ENCODE measurements at regions of chr9 and their contacts with region 1.

Region 1: GRCh38 chr9:71768388-71769174 is at the start of gene CEMIP2:
- DNase-seq: peak; percentile 91
- ATAC-seq: peak; percentile 80
- H3K4me3 ChIP-seq: peak within 1 kb of the TSS; percentile 73 to 95 (median 94)
- H3K4me3 Mint-ChIP-seq: peak within 1 kb of the TSS; percentile 92
- H3K27ac ChIP-seq: peak within 1 kb of the TSS; percentile 87 to 89
- H3K27ac Mint-ChIP-seq: peak within 1 kb of the TSS; percentile 97
- H3K4me1 ChIP-seq: peaks cover 47 to 56% of the 10 kb centered on the region in 2 donors
- H3K4me1 Mint-ChIP-seq: peaks cover 52% of the 10 kb centered on the region
- H3K27me3 ChIP-seq: no peaks in the 10 kb centered on the region
- H3K27me3 Mint-ChIP-seq: no peaks in the 10 kb centered on the region
- CTCF ChIP-seq: no peak
- total RNA-seq, gene CEMIP2: 86.9 and 90.6 TPM in 2 replicates

Region 2: GRCh38 chr9:71604197-71605063 is 164.2 kb before region 1 on chr9:
- CTCF ChIA-PET with region 1: interaction called, 12 read pairs
- POLR2A ChIA-PET with region 1: no interaction called
- intact Hi-C with region 1: loop called (anchors 2 kb)
- DNase-seq: peak; percentile 75
- ATAC-seq: peak; percentile 68
- H3K4me3 ChIP-seq: no peak overlapping the region
- H3K4me3 Mint-ChIP-seq: no peak overlapping the region
- H3K27ac ChIP-seq: no peak overlapping the region
- H3K27ac Mint-ChIP-seq: no peak overlapping the region
- H3K4me1 ChIP-seq: no peaks in the 10 kb centered on the region
- H3K4me1 Mint-ChIP-seq: no peaks in the 10 kb centered on the region
- H3K27me3 ChIP-seq: no peaks in the 10 kb centered on the region
- H3K27me3 Mint-ChIP-seq: no peaks in the 10 kb centered on the region
- CTCF ChIP-seq: peak; percentile 95

Region 3: DNA sequence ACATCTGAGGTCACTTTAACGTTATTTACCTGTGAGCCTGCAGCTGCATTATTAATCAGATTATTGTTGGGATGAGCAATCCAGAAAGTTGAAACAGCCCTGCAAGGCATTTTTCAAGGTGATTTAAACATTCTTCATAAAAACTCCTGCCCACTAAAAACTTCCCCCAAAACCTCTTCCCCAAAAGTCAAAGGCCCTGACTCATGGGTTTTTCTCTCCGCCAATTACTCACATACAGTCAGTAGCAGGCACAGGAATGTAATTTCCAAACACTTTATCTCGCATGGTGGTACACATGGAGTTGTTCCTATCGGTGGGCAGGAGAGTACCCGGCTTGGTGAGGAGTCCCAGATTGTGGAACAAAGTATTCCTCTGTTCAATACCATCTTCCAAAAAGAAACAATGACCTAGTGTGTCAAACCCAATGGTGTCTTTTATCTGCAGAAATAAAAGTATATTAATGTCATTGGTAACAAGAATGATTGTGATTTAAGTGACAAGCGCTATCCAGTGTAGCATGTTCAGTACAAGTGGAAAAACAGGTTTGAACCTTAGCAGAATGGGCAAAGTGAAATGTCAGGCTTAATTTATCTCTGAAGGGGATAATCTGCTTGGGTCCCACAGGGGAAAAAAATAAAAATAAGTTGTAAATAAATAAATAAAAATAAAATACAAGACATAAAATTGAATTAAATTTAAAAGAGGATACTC is 38.6 kb before region 1 on chr9:
- CTCF ChIA-PET with region 1: interaction called, 5 read pairs
- POLR2A ChIA-PET with region 1: interaction called, 3 read pairs
- intact Hi-C with region 1: loop called (anchors 5 kb)
- DNase-seq: no peak
- ATAC-seq: no peak
- H3K4me3 ChIP-seq: no peak overlapping the region
- H3K4me3 Mint-ChIP-seq: no peak overlapping the region
- H3K27ac ChIP-seq: no peak overlapping the region
- H3K27ac Mint-ChIP-seq: no peak overlapping the region
- H3K4me1 ChIP-seq: no peaks in the 10 kb centered on the region
- H3K4me1 Mint-ChIP-seq: no peaks in the 10 kb centered on the region
- H3K27me3 ChIP-seq: no peaks in the 10 kb centered on the region
- H3K27me3 Mint-ChIP-seq: no peaks in the 10 kb centered on the region
- CTCF ChIP-seq: no peak

Region 4: DNA sequence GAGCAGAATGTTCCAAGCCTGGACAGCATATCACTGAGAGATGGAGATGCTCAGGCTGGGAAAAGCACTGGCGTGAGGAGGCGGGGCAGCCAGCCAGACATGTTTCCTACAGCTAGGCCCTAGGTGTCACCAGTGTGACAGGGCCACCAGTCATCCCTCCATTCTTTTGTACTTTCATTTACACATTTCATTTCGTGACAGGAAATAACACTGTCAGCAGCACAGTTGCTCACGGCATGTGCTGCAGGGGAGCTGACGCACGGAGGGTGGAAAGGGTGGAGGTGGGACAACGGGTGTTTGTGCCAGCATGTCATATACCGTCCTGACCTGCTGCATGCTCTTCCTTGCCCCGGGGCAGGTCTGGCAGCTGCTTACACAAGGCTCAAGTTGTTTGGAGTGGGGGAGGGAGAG is 14.5 kb after region 1 on chr9:
- CTCF ChIA-PET with region 1: interaction called, 36 read pairs
- POLR2A ChIA-PET with region 1: interaction called, 17 read pairs
- intact Hi-C with region 1: loop called (anchors 1 kb)
- DNase-seq: peak; percentile 90
- ATAC-seq: peak; percentile 93
- H3K4me3 ChIP-seq: peak overlapping the region in 3 of 5 experiments; percentile 6 to 22 (median 19)
- H3K4me3 Mint-ChIP-seq: peak overlapping the region; percentile 74
- H3K27ac ChIP-seq: peak overlapping the region; percentile 77 to 85
- H3K27ac Mint-ChIP-seq: peak overlapping the region; percentile 93
- H3K4me1 ChIP-seq: peaks cover 30 to 32% of the 10 kb centered on the region in 2 donors
- H3K4me1 Mint-ChIP-seq: peaks cover 44% of the 10 kb centered on the region
- H3K27me3 ChIP-seq: no peaks in the 10 kb centered on the region
- H3K27me3 Mint-ChIP-seq: no peaks in the 10 kb centered on the region
- CTCF ChIP-seq: peak; percentile 48

Region 5: GRCh38 chr9:71806901-71807307 is 38.3 kb after region 1 on chr9:
- CTCF ChIA-PET with region 1: interaction called, 37 read pairs
- POLR2A ChIA-PET with region 1: interaction called, 3 read pairs
- intact Hi-C with region 1: loop called (anchors 2 kb)
- DNase-seq: peak; percentile 74
- ATAC-seq: peak; percentile 88
- H3K4me3 ChIP-seq: no peak overlapping the region
- H3K4me3 Mint-ChIP-seq: no peak overlapping the region
- H3K27ac ChIP-seq: no peak overlapping the region
- H3K27ac Mint-ChIP-seq: peak overlapping the region; percentile 2
- H3K4me1 ChIP-seq: peaks cover 14 to 16% of the 10 kb centered on the region in 2 donors
- H3K4me1 Mint-ChIP-seq: peaks cover 24% of the 10 kb centered on the region
- H3K27me3 ChIP-seq: no peaks in the 10 kb centered on the region
- H3K27me3 Mint-ChIP-seq: no peaks in the 10 kb centered on the region
- CTCF ChIP-seq: peak; percentile 89

Region 6: GRCh38 chr9:71911253-71912074 is 142.9 kb after region 1 on chr9 and contains the start of gene C9orf85:
- CTCF ChIA-PET with region 1: interaction called, 3 read pairs
- POLR2A ChIA-PET with region 1: interaction called, 6 read pairs
- intact Hi-C with region 1: loop called (anchors 1 kb)
- DNase-seq: peak; percentile 98
- ATAC-seq: peak; percentile 93
- H3K4me3 ChIP-seq: peak within 1 kb of the TSS; percentile 72 to 99 (median 85)
- H3K4me3 Mint-ChIP-seq: peak within 1 kb of the TSS; percentile 100
- H3K27ac ChIP-seq: peak within 1 kb of the TSS; percentile 74 to 80
- H3K27ac Mint-ChIP-seq: peak within 1 kb of the TSS; percentile 100
- H3K4me1 ChIP-seq: peaks cover 22 to 24% of the 10 kb centered on the region in 2 donors
- H3K4me1 Mint-ChIP-seq: peaks cover 66% of the 10 kb centered on the region
- H3K27me3 ChIP-seq: no peaks in the 10 kb centered on the region
- H3K27me3 Mint-ChIP-seq: no peaks in the 10 kb centered on the region
- CTCF ChIP-seq: no peak
- total RNA-seq, gene C9orf85: 9.4 and 9.6 TPM in 2 replicates

Region 7: DNA sequence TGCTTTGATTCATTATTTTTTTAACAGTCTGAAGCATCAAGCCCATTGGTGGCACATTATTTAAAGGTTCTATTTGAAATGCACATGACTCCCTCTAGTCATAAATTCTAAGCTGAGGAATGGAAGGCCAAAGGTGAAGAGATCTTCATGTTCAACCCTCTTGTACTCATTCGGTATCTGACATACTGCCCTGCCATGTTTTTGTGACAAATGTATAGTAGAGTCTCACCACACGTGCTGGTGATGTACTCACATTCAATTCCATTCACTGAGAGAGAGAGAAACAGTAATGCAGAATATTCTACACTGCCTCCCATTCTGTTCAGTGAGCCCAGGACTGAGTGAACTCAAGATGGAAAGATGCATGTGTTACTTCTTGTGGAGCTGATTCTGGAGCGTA is 479.0 kb after region 1 on chr9:
- CTCF ChIA-PET with region 1: no interaction called
- POLR2A ChIA-PET with region 1: no interaction called
- intact Hi-C with region 1: no loop called
- DNase-seq: no peak
- ATAC-seq: no peak
- H3K4me3 ChIP-seq: no peak overlapping the region
- H3K4me3 Mint-ChIP-seq: no peak overlapping the region
- H3K27ac ChIP-seq: no peak overlapping the region
- H3K27ac Mint-ChIP-seq: no peak overlapping the region
- H3K4me1 ChIP-seq: no peaks in the 10 kb centered on the region
- H3K4me1 Mint-ChIP-seq: no peaks in the 10 kb centered on the region
- H3K27me3 ChIP-seq: peaks cover 0 to 3% (median 0%) of the 10 kb centered on the region in 4 experiments
- H3K27me3 Mint-ChIP-seq: peaks cover 21% of the 10 kb centered on the region
- CTCF ChIP-seq: no peak

Region 8: GRCh38 chr9:72364679-72365524 is 596.3 kb after region 1 on chr9 and contains the start of gene ZFAND5:
- CTCF ChIA-PET with region 1: no interaction called
- POLR2A ChIA-PET with region 1: interaction called, 3 read pairs
- intact Hi-C with region 1: loop called (anchors 1 kb)
- DNase-seq: peak; percentile 97
- ATAC-seq: peak; percentile 78
- H3K4me3 ChIP-seq: peak within 1 kb of the TSS; percentile 71 to 95 (median 80)
- H3K4me3 Mint-ChIP-seq: peak within 1 kb of the TSS; percentile 95
- H3K27ac ChIP-seq: peak within 1 kb of the TSS; percentile 99 to 100
- H3K27ac Mint-ChIP-seq: peak within 1 kb of the TSS; percentile 97
- H3K4me1 ChIP-seq: peaks cover 22 to 24% of the 10 kb centered on the region in 2 donors
- H3K4me1 Mint-ChIP-seq: peaks cover 40% of the 10 kb centered on the region
- H3K27me3 ChIP-seq: no peaks in the 10 kb centered on the region
- H3K27me3 Mint-ChIP-seq: no peaks in the 10 kb centered on the region
- CTCF ChIP-seq: no peak
- total RNA-seq, gene ZFAND5: 93.8 and 95.3 TPM in 2 replicates